OCI-LY7 (cell line): ENCODE measurements at regions of chr2 and their contacts with region 1.

Region 1: DNA sequence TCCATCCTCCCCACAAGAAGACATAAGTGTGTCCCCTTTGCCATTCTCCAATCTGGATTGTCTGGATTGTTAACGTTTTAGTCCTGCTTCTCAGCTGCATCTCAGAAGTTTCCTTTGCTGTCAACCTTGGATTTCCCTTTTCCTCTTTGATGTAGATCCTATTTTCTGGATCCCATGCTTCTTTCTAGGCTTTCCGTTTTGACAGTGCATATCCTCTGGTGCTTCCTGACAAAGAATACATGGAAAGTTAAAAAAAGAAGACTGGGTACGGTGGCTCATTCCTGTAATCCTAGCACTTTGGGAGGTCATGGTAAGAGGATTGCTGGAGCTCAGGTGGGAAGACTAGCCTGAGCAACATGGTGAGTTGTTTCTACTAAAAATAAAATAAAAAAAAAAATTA is 26.8 kb downstream of the ABI2 start:
- DNase-seq: no peak
- H3K4me3 ChIP-seq: no peak overlapping the region
- H3K27ac ChIP-seq: no peak overlapping the region
- H3K4me1 ChIP-seq: peaks cover 5% of the 10 kb centered on the region
- CTCF ChIP-seq: no peak

Region 2: DNA sequence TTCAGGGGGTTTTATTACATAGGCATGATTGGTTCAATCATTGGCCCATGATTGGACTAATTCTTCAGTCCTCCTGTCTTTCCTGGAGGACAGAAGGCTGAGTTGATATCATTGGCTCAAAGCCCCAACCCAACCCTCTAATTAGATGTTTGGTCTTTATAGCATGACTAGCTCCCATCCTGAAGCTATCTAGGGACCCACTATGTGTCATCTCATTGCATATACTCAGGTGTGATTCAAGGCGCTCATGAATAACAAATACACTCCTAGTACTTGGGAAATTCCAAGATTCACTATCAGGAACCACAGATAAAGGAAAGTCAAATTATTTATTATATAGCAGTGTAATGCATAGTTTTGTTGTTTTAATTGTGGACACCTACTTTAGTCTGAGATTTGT is 365.2 kb before region 1 on chr2:
- CTCF ChIA-PET with region 1: no interaction called
- POLR2A ChIA-PET with region 1: no interaction called
- intact Hi-C with region 1: no loop called
- DNase-seq: no peak
- H3K4me3 ChIP-seq: no peak overlapping the region
- H3K27ac ChIP-seq: no peak overlapping the region
- H3K4me1 ChIP-seq: no peaks in the 10 kb centered on the region
- CTCF ChIP-seq: no peak

Region 3: DNA sequence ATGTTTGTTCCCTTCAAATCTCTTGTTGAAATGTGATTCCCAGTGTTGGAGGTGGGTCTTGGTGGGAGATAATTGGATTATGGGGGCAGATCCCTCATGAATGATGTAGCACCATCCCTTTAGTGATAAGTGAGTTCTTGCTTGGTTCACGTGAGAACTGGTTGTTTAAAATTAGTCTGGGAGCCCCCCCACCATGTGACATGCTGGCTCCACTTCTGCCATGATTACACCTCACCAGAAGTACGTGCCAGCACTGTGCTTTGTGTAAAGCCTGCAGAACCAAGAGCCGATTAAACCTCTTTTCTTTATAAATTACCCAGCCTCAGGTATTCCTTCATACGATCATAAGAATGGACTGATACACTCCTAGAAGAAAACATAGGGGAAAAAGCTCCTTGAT is 16.6 kb before region 1 on chr2:
- CTCF ChIA-PET with region 1: no interaction called
- POLR2A ChIA-PET with region 1: no interaction called
- intact Hi-C with region 1: no loop called
- DNase-seq: no peak
- H3K4me3 ChIP-seq: no peak overlapping the region
- H3K27ac ChIP-seq: no peak overlapping the region
- H3K4me1 ChIP-seq: no peaks in the 10 kb centered on the region
- CTCF ChIP-seq: no peak

Region 4: DNA sequence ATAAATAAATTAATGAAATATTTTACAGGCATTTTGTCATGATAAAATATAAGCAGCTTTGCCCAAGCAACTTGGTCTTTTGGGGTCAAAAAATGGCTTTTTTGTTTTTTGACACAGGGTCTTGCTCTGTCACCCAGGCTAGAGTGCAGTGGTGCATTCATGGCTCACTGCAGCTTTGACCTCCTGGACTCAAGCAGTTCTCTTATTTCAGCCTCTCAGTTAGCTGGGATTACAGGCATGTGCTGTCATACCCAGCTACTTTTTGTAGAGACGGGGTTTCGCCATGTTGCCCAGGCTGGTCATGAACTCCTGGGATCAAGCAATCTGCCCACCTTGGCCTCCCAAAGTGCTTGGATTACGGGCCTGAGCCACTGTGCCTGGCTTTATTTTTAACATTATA is 24.2 kb after region 1 on chr2:
- CTCF ChIA-PET with region 1: no interaction called
- POLR2A ChIA-PET with region 1: no interaction called
- intact Hi-C with region 1: loop called (anchors 1 kb)
- DNase-seq: no peak
- H3K4me3 ChIP-seq: no peak overlapping the region
- H3K27ac ChIP-seq: no peak overlapping the region
- H3K4me1 ChIP-seq: no peaks in the 10 kb centered on the region
- CTCF ChIP-seq: no peak